ENCODE measurements at regions of chr14 and their contacts with region 1.

Region 1: DNA sequence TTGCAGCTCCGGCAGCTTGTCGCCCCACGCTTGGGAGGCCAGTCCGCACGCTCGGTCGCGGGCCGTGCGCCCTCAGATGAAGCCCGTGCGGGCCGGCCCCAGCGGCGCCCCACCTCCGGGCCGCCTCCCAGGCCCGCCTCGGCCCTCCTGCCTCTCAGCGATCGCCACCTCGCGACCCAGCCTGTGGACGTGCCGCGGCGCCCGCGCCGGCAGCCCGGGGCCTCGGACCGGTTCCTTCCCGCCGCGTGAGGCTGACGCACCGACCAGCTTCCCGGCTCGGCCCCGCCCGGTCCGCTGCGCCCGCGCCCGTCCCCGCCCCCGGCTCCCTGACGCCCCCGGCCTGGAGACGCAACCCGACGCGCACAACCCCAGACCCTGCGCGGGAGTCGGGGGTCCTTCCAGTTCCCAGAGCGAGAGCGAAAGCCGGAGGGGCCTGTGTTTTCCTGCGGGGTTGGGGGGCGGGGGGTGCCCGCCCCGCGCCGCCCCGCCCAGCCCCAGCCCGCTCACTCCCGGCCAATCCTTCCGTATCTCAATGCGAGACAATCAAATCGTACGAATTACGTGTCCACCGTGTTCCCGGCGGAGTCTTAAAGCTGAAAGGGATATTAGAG is at the start of gene ERO1A:
- DNase-seq: peak; percentile 62 to 71 (median 63)
- ATAC-seq: peak; percentile 87
- H3K4me3 ChIP-seq: peak within 1 kb of the TSS; percentile 82
- H3K27ac ChIP-seq: peak within 1 kb of the TSS; percentile 85
- H3K4me1 ChIP-seq: peaks cover 9 to 15% of the 10 kb centered on the region in 2 experiments; a peak in 4 of 5 replicates
- H3K27me3 ChIP-seq: no peaks in the 10 kb centered on the region
- CTCF ChIP-seq: no peak
- EP300 ChIP-seq: no peak
- POLR2A ChIP-seq: no peak
- RAD21 ChIP-seq: no peak
- polyA plus RNA-seq, gene ERO1A: 11.0 to 22.3 TPM

Region 2: DNA sequence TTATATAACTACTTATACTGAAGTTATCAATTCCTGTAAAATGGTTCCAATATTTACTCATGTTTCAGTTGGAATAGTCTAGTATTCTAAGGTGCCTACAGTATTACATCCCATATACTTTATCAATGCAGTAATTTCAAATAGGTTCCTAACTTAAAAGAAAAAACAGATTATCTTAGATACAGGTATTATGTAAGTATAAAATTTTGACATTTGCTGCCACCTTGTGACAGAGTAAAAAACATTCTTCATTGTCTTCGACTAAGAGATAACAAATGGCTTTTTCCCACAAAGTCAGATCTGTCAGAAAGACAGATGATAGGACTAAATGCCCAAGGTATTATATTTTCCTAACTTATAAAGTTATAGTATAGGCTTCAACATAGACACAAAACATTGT is 222.0 kb before region 1 on chr14:
- CTCF ChIA-PET with region 1: no interaction called
- POLR2A ChIA-PET with region 1: no interaction called
- in situ Hi-C with region 1: no loop called
- intact Hi-C with region 1: no loop called
- DNase-seq: peak in 1 of 4 experiments; percentile 6
- ATAC-seq: no peak
- H3K4me3 ChIP-seq: no peak overlapping the region
- H3K27ac ChIP-seq: no peak overlapping the region
- H3K4me1 ChIP-seq: no peaks in the 10 kb centered on the region
- H3K27me3 ChIP-seq: no peaks in the 10 kb centered on the region
- CTCF ChIP-seq: peak in 1 of 3 experiments; percentile 28; a peak in 1 of 6 replicates
- EP300 ChIP-seq: no peak
- POLR2A ChIP-seq: no peak
- RAD21 ChIP-seq: peak in 1 of 2 experiments; percentile 19; a peak in 1 of 4 replicates

Region 3: GRCh38 chr14:52514046-52514811 is 181.4 kb before region 1 on chr14:
- CTCF ChIA-PET with region 1: no interaction called
- POLR2A ChIA-PET with region 1: no interaction called
- in situ Hi-C with region 1: no loop called
- intact Hi-C with region 1: no loop called
- DNase-seq: peak in 2 of 4 experiments; percentile 15 to 41
- ATAC-seq: peak; percentile 82
- H3K4me3 ChIP-seq: no peak overlapping the region
- H3K27ac ChIP-seq: peak overlapping the region; percentile 22; the same call in 2 of the 3 replicates
- H3K4me1 ChIP-seq: peaks cover 3 to 12% of the 10 kb centered on the region in 2 experiments; a peak in 3 of 5 replicates
- H3K27me3 ChIP-seq: no peaks in the 10 kb centered on the region
- CTCF ChIP-seq: no peak
- EP300 ChIP-seq: no peak
- POLR2A ChIP-seq: no peak
- RAD21 ChIP-seq: no peak

Region 4: GRCh38 chr14:52552063-52552988 is 143.3 kb before region 1 on chr14 and contains the starts of genes GPR137C and TXNDC16:
- CTCF ChIA-PET with region 1: no interaction called
- POLR2A ChIA-PET with region 1: no interaction called
- in situ Hi-C with region 1: no loop called
- intact Hi-C with region 1: loop called (anchors 5 kb)
- DNase-seq: peak; percentile 91 to 98 (median 94)
- ATAC-seq: peak; percentile 95
- H3K4me3 ChIP-seq: peak within 1 kb of the TSS; percentile 57
- H3K27ac ChIP-seq: peak within 1 kb of the TSS; percentile 69
- H3K4me1 ChIP-seq: peaks cover 11 to 12% of the 10 kb centered on the region in 2 experiments
- H3K27me3 ChIP-seq: no peaks in the 10 kb centered on the region
- CTCF ChIP-seq: no peak
- EP300 ChIP-seq: no peak
- POLR2A ChIP-seq: peak; percentile 79
- RAD21 ChIP-seq: no peak
- polyA plus RNA-seq, gene GPR137C: 0.03 to 0.06 TPM
- polyA plus RNA-seq, gene TXNDC16: 1.8 to 1.9 TPM

Region 5: DNA sequence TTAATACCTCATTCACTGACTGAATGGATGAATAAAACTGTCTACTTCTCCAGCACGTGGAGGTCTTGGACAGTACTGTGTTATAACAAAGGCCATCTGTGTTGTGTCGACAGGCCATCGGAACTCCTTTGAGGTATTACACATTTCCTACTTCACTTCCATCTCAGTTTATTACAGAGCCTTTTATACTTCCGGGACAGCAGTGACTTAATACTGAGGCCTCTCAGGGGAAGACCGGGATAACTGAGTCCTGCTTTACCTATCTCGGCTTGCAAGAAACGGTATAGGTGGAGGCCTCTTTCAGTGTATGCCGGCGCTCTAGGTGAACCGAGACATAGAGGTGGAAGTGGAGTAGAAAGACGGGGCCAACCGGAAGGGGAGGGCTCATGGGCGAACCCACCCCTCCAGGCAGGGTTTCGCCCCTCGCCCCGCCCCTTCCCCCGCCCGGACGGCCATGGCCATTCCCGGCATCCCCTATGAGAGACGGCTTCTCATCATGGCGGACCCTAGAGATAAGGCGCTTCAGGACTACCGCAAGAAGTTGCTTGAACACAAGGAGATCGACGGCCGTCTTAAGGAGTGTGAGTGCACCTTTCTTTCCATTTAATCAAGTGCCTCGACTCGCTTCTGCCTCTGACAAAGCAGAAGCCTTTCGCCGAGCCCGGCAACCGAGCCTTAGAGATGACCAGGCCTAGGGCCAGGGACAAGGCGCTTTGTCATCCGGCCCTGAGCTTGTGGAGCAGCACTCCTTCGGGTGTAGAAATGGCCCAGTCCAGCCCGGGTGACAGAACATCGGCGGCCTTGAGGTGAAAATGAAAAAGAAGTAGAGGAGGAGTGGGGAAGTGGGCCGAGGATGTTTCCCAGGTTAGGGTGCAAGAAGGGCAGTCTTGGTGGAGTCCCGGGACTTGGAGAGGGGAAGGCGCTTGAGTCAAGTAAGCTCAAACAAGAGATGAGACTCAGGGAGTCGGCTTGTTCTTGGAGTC is 11.4 kb after region 1 on chr14 and contains the start of gene PSMC6:
- CTCF ChIA-PET with region 1: no interaction called
- POLR2A ChIA-PET with region 1: interaction called, 5 read pairs
- in situ Hi-C with region 1: no loop called
- intact Hi-C with region 1: loop called (anchors 1 kb)
- DNase-seq: peak; percentile 91 to 93 (median 92)
- ATAC-seq: peak; percentile 97
- H3K4me3 ChIP-seq: peak within 1 kb of the TSS; percentile 90
- H3K27ac ChIP-seq: peak within 1 kb of the TSS; percentile 95
- H3K4me1 ChIP-seq: peaks cover 0 to 3% of the 10 kb centered on the region in 2 experiments; a peak in 2 of 5 replicates
- H3K27me3 ChIP-seq: no peaks in the 10 kb centered on the region
- CTCF ChIP-seq: no peak
- EP300 ChIP-seq: no peak
- POLR2A ChIP-seq: peak; percentile 94
- RAD21 ChIP-seq: no peak
- polyA plus RNA-seq, gene PSMC6: 214 to 224 TPM

Region 6: DNA sequence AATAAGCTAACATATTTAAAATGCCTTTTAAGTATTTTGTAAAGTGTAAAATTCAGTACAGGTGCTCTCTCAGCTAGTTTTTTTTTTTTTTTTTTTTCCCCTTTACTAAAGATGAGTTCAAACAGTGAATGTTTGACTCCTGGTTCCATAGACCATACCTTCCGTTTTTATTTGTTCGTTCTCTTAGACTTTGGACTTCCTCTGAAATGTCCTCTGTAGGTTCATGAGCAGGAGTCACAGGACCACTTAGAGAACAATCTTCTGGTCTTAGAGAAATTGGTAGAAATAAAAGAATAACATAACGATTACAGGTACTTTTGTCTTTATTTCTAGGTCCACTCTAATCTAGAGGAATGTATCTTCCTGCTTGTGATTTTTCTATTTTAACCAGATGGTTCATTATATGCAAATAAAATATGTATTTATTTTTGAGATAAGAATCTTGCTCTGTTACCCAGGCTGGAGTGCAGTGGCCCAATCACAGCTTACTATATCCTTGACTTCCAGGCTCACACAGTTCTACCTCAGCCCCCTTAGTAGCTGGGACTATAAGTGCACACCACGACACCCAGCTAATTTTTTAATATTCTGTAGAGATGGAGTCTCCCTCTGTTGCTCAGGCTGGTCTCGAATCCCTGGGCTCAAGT is 60.1 kb after region 1 on chr14:
- CTCF ChIA-PET with region 1: no interaction called
- POLR2A ChIA-PET with region 1: no interaction called
- in situ Hi-C with region 1: no loop called
- intact Hi-C with region 1: no loop called
- DNase-seq: no peak
- ATAC-seq: no peak
- H3K4me3 ChIP-seq: no peak overlapping the region
- H3K27ac ChIP-seq: no peak overlapping the region
- H3K4me1 ChIP-seq: no peaks in the 10 kb centered on the region
- H3K27me3 ChIP-seq: no peaks in the 10 kb centered on the region
- CTCF ChIP-seq: no peak
- EP300 ChIP-seq: no peak
- POLR2A ChIP-seq: no peak
- RAD21 ChIP-seq: no peak

Region 7: GRCh38 chr14:52776816-52777215 is 81.2 kb after region 1 on chr14:
- CTCF ChIA-PET with region 1: no interaction called
- POLR2A ChIA-PET with region 1: no interaction called
- in situ Hi-C with region 1: no loop called
- intact Hi-C with region 1: no loop called
- DNase-seq: no peak
- ATAC-seq: 0 out of 3 replicates have a peak, but pooled peaks have one; percentile 29
- H3K4me3 ChIP-seq: no peak overlapping the region
- H3K27ac ChIP-seq: no peak overlapping the region
- H3K4me1 ChIP-seq: no peaks in the 10 kb centered on the region
- H3K27me3 ChIP-seq: no peaks in the 10 kb centered on the region
- CTCF ChIP-seq: no peak; a peak in 1 of 6 replicates
- EP300 ChIP-seq: no peak
- POLR2A ChIP-seq: no peak
- RAD21 ChIP-seq: no peak

Measured in K562 (cell line).